ENCODE measurements at regions of chrX and their contacts with region 1.

Region 1: DNA sequence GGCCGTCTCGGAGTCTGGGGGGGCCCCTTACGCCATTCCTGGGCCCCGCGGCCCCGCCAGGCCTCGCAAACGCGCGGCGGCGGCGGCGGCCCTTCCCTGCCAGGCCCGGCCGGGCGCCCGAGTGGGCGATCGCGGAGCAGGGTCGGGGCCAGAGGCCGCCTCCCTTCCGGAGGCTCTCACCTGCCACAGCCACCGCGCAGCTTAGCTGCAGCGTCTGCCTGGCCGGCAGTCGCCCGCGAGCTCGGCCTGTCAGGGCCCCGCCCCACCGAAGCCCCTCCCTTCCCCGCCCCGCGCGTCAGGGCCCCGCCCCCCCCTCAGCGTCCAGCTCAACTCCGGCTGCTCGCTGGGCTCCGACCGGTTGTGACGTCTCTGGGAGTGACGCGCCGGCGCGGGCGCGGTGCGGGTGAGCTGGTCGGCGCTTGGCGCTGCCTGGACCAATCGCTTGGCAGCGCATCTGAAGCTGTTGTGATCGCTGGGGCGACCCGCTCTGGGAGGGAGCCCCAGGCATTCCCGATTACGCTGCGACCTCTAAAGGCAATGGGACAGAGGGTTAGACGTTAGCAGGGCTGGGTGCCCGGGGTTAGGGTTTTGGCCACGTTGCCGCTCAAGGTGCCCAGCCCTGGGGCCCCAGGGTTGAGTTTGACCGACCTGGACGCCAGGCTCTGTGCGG is at the start of gene SLC10A3:
- H3K4me3 ChIP-seq: peak within 1 kb of the TSS; percentile 56
- H3K27ac ChIP-seq: peak within 1 kb of the TSS; percentile 76
- H3K4me1 ChIP-seq: no peaks in the 10 kb centered on the region; the same call in 1 of the 2 replicates
- CTCF ChIP-seq: peak; percentile 69; the same call in 1 of the 2 replicates

Region 2: DNA sequence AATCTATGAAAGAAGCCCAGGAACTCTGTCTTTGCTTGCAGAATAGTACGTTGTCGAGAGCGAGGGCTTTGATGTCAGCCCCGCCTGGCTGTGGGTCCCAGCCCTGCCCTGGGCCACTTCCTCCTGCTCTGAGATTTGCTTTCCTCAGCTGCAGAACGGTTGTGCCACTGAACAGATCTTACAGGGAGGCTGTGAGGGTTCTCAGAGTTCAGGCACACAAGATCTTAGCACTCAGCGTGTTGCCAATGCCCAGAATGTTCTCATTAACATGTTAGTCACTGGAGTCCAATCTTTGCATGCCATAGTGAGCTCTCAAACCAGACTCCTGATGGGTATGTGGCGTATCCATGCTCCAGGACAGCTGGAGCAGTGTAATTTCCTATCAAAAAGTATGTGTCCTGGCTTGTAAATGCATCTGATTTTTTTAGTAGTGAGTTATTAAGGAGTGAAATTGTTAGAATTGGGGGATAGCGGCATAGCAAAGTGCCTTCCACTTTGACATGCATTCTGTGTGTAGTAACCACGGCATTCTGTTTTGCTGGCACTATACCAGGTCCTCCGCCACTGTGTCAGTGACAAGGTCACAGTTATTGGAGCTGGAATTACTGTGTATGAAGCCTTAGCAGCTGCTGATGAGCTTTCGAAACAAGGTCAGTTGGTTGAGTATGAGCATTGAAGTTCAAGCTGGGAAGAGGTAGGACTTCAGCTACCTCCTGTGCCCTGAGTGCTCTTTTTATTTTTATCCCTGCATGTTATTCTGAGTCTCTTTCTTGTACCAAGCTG is 163.3 kb before region 1 on chrX:
- CTCF ChIA-PET with region 1: no interaction called
- POLR2A ChIA-PET with region 1: no interaction called
- H3K4me3 ChIP-seq: no peak overlapping the region
- H3K27ac ChIP-seq: no peak overlapping the region
- H3K4me1 ChIP-seq: peaks cover 18% of the 10 kb centered on the region
- CTCF ChIP-seq: no peak

Region 3: GRCh38 chrX:154397819-154398724 is 92.5 kb before region 1 on chrX and contains the start of gene RPL10:
- CTCF ChIA-PET with region 1: no interaction called
- POLR2A ChIA-PET with region 1: interaction called, 21 read pairs
- H3K4me3 ChIP-seq: peak within 1 kb of the TSS; percentile 66
- H3K27ac ChIP-seq: peak within 1 kb of the TSS; percentile 84
- H3K4me1 ChIP-seq: no peaks in the 10 kb centered on the region
- CTCF ChIP-seq: no peak

Region 4: GRCh38 chrX:154458114-154458953 is 32.2 kb before region 1 on chrX and contains the start of gene PLXNA3:
- CTCF ChIA-PET with region 1: no interaction called
- POLR2A ChIA-PET with region 1: interaction called, 10 read pairs
- H3K4me3 ChIP-seq: peak within 1 kb of the TSS; percentile 70
- H3K27ac ChIP-seq: peak within 1 kb of the TSS; percentile 75
- H3K4me1 ChIP-seq: no peaks in the 10 kb centered on the region
- CTCF ChIP-seq: no peak

Region 5: DNA sequence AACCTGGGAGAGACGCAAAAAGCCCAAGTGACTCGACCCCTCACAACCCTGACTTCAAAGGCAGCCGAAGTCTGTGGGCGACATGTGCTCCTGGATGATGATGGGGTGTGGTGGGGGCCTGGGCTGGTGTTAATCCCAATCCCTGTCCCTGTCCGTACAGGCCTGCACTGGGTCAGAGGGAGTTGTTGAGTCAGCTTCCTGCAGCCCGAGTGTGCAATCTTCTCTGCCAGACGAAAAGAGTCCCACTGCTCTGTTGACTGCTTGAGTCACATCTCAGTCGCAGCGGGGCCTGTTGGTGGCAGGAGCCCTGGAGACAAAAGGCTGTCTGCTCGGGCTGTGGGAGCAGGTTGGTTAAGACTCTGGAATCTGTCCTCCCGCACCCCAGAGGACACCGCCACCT is 15.2 kb after region 1 on chrX:
- CTCF ChIA-PET with region 1: interaction called, 3 read pairs
- POLR2A ChIA-PET with region 1: interaction called, 14 read pairs
- H3K4me3 ChIP-seq: no peak overlapping the region
- H3K27ac ChIP-seq: no peak overlapping the region
- H3K4me1 ChIP-seq: no peaks in the 10 kb centered on the region
- CTCF ChIP-seq: no peak

Region 6: DNA sequence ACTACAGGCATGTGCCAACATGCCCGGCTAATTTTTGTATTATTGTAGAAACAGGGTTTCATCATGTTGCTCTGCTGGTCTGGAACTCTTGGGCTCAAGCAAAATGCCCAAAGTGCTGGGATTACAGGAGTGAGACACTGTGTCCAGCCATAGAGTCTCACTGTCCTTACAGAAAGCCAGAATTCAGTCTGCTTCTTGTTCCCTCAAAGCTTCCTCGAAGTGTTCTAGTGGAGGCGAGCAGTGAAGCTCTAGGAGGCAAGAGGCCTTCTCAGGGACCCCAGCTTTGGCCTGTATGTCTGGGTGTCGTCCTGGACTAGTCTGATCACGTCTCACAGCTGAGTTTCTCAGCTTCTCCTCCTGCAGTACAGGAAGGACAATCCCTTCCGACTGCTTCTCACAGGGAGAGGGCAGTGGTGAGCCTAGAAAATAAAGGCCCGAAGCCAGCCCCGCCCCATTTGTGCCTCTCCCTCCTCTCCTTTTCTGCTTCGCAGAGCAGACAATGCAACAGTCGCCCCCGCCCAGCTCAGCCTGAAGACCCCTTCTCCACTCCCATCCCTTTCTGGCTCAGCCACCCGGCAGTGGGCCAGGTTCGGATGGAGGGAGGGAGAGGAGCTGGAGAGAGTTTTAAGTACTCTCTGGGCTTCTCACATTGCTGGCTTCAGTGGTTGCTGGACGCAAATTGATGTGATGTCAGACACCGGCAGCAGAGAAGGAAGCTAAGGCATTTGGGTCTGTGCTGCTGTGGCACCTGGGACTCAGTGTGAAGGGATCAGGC is 36.5 kb after region 1 on chrX:
- CTCF ChIA-PET with region 1: interaction called, 8 read pairs
- POLR2A ChIA-PET with region 1: interaction called, 15 read pairs
- H3K4me3 ChIP-seq: peak overlapping the region; percentile 19
- H3K27ac ChIP-seq: peak overlapping the region; percentile 57
- H3K4me1 ChIP-seq: 0 out of 2 replicates have a peak, but pooled peaks cover 2% of the 10 kb centered on the region
- CTCF ChIP-seq: no peak; the same call in 1 of the 2 replicates